ENCODE measurements at regions of chr6 and their contacts with region 1.

Region 1: DNA sequence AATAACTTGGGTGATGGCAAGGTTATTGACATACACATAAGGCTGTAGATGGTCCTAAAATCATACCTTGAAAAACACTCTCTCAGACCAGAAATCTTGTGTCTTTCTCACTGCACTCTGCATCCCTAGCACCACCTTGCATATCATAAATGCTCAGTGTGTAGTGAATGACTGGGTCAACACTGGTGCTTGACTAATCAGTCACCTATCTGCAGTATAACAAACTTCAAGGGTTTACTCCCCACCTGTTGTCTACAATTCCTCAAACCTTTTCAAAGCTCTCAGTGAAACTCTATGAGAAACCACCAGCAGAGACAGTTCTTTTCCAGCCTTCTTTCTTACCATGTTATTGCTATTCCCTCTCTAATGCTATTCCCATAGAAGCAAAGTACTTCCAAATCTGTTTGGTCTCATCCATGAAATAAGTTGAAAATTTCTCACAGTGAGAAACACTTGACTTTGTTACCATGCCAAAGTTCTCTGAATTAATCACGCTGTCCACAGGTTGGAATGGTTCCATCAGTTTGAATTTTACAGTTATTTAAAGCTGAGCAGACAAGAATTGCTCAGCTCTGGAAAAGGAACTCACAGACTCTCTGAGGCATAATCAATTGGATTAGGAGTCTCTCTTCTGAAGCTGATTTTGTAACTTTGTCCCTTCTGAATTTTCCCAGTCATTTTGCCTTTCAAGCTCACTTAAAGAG is 104.8 kb upstream of the EYA4 start:
- DNase-seq: no peak
- ATAC-seq: no peak

Region 2: GRCh38 chr6:133179481-133179880 is 43.2 kb after region 1 on chr6:
- intact Hi-C with region 1: loop called (anchors 5 kb)
- DNase-seq: no peak
- ATAC-seq: no peak

Region 3: DNA sequence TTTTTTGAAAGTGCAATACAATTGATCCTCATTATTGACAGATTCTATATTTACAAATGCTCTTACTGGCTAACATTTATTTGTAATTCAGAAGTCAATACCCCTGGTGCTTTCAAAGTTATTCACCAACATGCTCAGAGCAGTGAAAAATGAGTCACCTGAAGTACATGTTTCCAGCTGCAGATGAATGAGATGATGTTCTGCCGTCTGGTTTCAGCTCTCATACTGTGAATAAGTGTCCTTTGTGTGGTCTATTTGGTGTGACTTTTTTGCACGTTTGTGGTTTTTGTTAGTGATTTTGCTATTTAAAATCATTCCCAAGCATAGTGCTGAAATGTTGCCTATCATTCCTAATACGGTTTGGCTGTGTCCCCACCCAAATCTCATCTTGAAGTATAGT is 82.5 kb after region 1 on chr6:
- intact Hi-C with region 1: no loop called
- DNase-seq: no peak
- ATAC-seq: no peak